BJ (cell line): ENCODE measurements at regions of chr10 and their contacts with region 1.

Region 1: GRCh38 chr10:123967396-123968243 is 76.0 kb upstream of the CPXM2 start:
- DNase-seq: no peak
- H3K4me3 ChIP-seq: no peak overlapping the region
- H3K27me3 ChIP-seq: peaks cover 10% of the 10 kb centered on the region
- CTCF ChIP-seq: peak; percentile 93

Region 2: GRCh38 chr10:123573236-123574108 is 394.1 kb before region 1 on chr10:
- CTCF ChIA-PET with region 1: interaction called, 179 read pairs
- POLR2A ChIA-PET with region 1: no interaction called
- DNase-seq: no peak
- H3K4me3 ChIP-seq: no peak overlapping the region
- H3K27me3 ChIP-seq: no peaks in the 10 kb centered on the region
- CTCF ChIP-seq: peak; percentile 60

Region 3: DNA sequence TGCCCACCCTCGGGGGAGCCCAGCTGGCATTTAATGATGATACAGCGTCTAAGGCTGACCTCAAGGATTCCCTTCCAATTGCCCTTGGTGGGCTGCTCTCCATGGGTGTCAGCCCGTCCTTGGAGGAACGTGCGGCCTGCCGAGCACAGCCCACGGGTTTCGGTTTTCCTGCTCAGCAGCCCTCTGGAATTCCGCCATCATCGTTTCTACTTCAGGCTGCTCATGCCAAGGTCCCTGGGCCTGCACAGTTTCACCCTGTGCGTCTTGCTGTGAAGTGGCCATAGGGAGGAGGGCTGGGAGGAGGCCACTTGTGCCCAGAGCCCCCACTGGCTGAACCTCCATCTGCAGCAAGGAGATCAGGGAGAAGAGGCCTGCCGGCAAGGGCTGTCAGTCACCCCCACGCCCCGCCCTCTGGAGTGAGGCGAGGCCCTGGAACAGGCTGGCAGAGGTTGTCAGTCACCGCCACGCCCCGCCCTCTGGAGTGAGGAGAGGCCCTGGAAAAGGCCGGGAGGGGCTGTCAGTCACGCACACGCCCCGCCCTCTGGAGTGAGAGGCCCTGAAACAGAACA is 43.0 kb after region 1 on chr10:
- CTCF ChIA-PET with region 1: no interaction called
- POLR2A ChIA-PET with region 1: no interaction called
- DNase-seq: no peak
- H3K4me3 ChIP-seq: no peak overlapping the region
- H3K27me3 ChIP-seq: no peaks in the 10 kb centered on the region
- CTCF ChIP-seq: no peak